ENCODE measurements at regions of chr15 and their contacts with region 1.

Region 1: GRCh38 chr15:32029862-32030781 is at the start of gene CHRNA7:
- DNase-seq: peak; percentile 94
- H3K4me3 ChIP-seq: peak within 1 kb of the TSS; percentile 58 to 59
- H3K27ac ChIP-seq: peak within 1 kb of the TSS in 1 of 2 experiments; percentile 92; a peak in 2 of 4 replicates
- H3K4me1 ChIP-seq: peaks cover 0 to 34% of the 10 kb centered on the region in 2 experiments; a peak in 2 of 4 replicates
- H3K27me3 ChIP-seq: peaks cover 23% of the 10 kb centered on the region; the same call in 1 of the 2 replicates
- CTCF ChIP-seq: peak; percentile 10; the same call in 1 of the 2 replicates
- EP300 ChIP-seq: no peak
- RAD21 ChIP-seq: no peak
- polyA plus RNA-seq, gene CHRNA7: 0.38 and 0.80 TPM in 2 replicates

Region 2: GRCh38 chr15:31953478-31953877 is 76.6 kb before region 1 on chr15:
- CTCF ChIA-PET with region 1: no interaction called
- POLR2A ChIA-PET with region 1: no interaction called
- DNase-seq: no peak
- H3K4me3 ChIP-seq: no peak overlapping the region
- H3K27ac ChIP-seq: no peak overlapping the region
- H3K4me1 ChIP-seq: no peaks in the 10 kb centered on the region; a peak in 1 of 4 replicates
- H3K27me3 ChIP-seq: no peaks in the 10 kb centered on the region
- CTCF ChIP-seq: no peak
- EP300 ChIP-seq: no peak
- RAD21 ChIP-seq: no peak

Region 3: DNA sequence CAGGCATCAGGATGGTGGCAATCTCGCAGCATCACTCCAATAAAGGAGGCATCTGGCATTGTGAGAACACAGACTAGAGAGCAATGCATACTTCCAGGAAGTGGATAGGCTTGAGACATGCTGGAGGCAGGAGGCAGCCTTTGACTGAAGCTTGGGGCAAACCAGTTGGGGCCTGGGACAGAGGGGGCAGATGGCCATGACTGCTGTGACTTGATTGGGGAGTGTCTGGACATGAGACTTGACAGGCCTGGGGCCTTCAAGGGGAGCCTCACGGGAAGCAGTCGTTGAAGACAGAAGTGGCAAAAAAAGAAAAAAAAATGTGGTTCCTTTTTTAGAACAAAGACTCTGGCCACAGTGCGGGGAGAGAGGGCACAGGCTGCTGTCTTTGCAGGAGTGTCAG is 44.5 kb before region 1 on chr15:
- CTCF ChIA-PET with region 1: interaction called, 60 read pairs
- POLR2A ChIA-PET with region 1: interaction called, 3 read pairs
- DNase-seq: peak; percentile 36
- H3K4me3 ChIP-seq: no peak overlapping the region
- H3K27ac ChIP-seq: peak overlapping the region in 1 of 2 experiments; percentile 71; a peak in 2 of 4 replicates
- H3K4me1 ChIP-seq: peaks cover 0 to 29% of the 10 kb centered on the region in 2 experiments; a peak in 2 of 4 replicates
- H3K27me3 ChIP-seq: no peaks in the 10 kb centered on the region
- CTCF ChIP-seq: no peak
- EP300 ChIP-seq: 0 out of 4 replicates have a peak, but pooled peaks of 1 of the 2 experiments have one; percentile 7
- RAD21 ChIP-seq: no peak

Region 4: DNA sequence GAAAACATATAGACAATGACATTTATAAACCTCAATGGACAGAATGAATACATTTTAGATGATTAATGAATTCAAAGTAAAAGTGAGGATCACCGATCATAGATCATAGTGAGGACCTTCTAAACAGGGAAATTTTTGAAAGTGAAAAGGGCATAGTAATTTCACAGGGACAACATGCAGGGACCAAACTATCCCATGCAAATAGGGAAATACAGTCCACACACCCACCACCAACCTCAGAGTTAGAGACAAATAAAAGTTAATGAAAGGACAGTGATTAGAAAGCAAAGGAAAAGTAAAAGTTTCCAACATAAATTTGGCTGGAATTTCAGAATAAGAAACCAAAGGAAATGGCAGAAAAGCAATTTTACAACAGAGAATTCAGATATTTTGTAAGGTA is 15.2 kb before region 1 on chr15:
- CTCF ChIA-PET with region 1: interaction called, 26 read pairs
- POLR2A ChIA-PET with region 1: no interaction called
- DNase-seq: no peak
- H3K4me3 ChIP-seq: no peak overlapping the region
- H3K27ac ChIP-seq: no peak overlapping the region
- H3K4me1 ChIP-seq: peaks cover 0 to 2% of the 10 kb centered on the region in 2 experiments; a peak in 1 of 4 replicates
- H3K27me3 ChIP-seq: no peaks in the 10 kb centered on the region
- CTCF ChIP-seq: no peak
- EP300 ChIP-seq: no peak
- RAD21 ChIP-seq: no peak

Region 5: DNA sequence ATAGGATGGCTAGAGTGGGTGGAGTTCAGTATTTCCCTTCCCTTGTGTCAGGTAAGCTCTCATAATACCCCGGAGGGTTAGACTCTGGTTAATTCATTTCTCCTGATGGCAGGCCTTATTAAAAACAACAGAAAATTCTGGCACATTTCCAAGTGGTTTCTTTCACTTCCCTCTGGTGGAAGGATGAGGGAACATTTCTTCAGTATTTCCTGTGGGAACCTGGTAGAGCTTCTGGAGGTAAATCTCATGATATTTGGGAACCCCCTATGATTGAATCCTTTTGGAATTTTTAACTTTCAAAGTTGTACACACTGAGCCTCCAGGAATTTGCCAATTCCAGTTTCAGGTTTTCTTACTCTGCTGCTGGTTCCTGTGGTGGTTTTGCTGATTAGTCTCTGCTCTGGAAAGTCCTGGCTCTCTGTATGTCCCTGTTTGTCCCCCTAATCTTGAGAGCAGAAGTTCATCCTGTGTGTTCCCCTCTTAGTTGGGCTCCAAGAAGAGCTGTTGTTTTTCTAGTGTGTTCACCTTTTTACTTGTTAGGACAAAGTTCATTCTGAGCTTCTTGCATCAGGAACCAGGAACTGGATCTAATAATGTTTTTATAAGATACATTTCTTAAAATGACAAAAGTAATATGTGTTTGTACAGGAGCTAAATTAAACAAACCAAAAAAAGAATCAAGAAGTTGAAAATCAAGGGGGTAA is 12.3 kb after region 1 on chr15:
- CTCF ChIA-PET with region 1: interaction called, 20 read pairs
- POLR2A ChIA-PET with region 1: no interaction called
- DNase-seq: peak; percentile 51
- H3K4me3 ChIP-seq: no peak overlapping the region
- H3K27ac ChIP-seq: peak overlapping the region in 1 of 2 experiments; percentile 71; a peak in 2 of 4 replicates
- H3K4me1 ChIP-seq: peaks cover 0 to 16% of the 10 kb centered on the region in 2 experiments; a peak in 2 of 4 replicates
- H3K27me3 ChIP-seq: no peaks in the 10 kb centered on the region
- CTCF ChIP-seq: no peak
- EP300 ChIP-seq: 0 out of 4 replicates have a peak, but pooled peaks of 1 of the 2 experiments have one; percentile 4
- RAD21 ChIP-seq: no peak

Region 6: GRCh38 chr15:32057876-32058423 is 27.8 kb after region 1 on chr15:
- CTCF ChIA-PET with region 1: interaction called, 17 read pairs
- POLR2A ChIA-PET with region 1: interaction called, 3 read pairs
- DNase-seq: no peak
- H3K4me3 ChIP-seq: no peak overlapping the region
- H3K27ac ChIP-seq: peak overlapping the region in 1 of 2 experiments; percentile 47; a peak in 2 of 4 replicates
- H3K4me1 ChIP-seq: peaks cover 0 to 7% of the 10 kb centered on the region in 2 experiments; a peak in 2 of 4 replicates
- H3K27me3 ChIP-seq: no peaks in the 10 kb centered on the region
- CTCF ChIP-seq: no peak
- EP300 ChIP-seq: no peak
- RAD21 ChIP-seq: no peak

Region 7: DNA sequence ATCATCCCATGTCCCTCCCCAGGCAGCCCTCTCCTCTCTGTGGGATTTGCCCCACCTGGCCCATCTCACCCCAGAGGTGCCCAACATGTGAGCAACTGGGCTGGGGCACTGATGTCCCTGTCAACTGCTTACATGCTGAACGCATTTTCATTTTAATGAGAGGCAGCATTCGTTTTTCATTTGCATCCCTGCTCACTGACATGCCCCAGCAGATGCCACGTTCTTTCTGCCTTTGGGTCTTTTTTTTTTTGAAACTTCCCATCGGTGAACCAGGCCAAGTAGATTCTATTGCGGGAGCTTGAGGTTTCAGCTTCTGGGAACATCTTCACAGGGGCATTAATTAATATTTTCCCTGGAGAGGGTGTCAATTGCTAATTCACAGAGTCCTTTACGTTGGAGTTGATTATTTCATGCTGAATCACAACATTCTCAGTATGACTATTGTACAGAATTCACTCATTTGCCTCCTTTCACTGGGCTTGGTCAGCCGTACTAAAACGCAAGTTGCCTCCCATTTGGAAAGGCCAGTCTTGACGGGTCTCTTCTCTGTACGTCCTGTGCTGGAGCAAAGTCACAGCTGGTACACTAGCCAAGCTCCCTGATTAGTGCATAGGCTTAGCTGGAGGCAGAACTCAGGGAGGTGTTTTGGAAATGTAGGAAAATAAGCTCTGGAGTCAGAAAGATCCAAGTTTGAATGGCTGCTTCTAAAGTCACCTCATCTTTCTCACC is 70.0 kb after region 1 on chr15:
- CTCF ChIA-PET with region 1: interaction called, 15 read pairs
- POLR2A ChIA-PET with region 1: interaction called, 4 read pairs
- DNase-seq: no peak
- H3K4me3 ChIP-seq: no peak overlapping the region
- H3K27ac ChIP-seq: peak overlapping the region in 1 of 2 experiments; percentile 89; a peak in 2 of 4 replicates
- H3K4me1 ChIP-seq: peaks cover 0 to 51% of the 10 kb centered on the region in 2 experiments; a peak in 2 of 4 replicates
- H3K27me3 ChIP-seq: no peaks in the 10 kb centered on the region
- CTCF ChIP-seq: no peak
- EP300 ChIP-seq: no peak
- RAD21 ChIP-seq: no peak

Region 8: GRCh38 chr15:32119694-32120330 is 89.7 kb after region 1 on chr15:
- CTCF ChIA-PET with region 1: interaction called, 13 read pairs
- POLR2A ChIA-PET with region 1: interaction called, 6 read pairs
- DNase-seq: peak; percentile 72
- H3K4me3 ChIP-seq: no peak overlapping the region
- H3K27ac ChIP-seq: peak overlapping the region in 1 of 2 experiments; percentile 93; a peak in 2 of 4 replicates
- H3K4me1 ChIP-seq: peaks cover 0 to 66% of the 10 kb centered on the region in 2 experiments; a peak in 2 of 4 replicates
- H3K27me3 ChIP-seq: no peaks in the 10 kb centered on the region
- CTCF ChIP-seq: no peak
- EP300 ChIP-seq: peak in 1 of 2 experiments; percentile 60; a peak in 2 of 4 replicates
- RAD21 ChIP-seq: no peak

Measured in SK-N-SH (cell line).